Common myeloid progenitor, CD34-positive (primary cell): ENCODE measurements at regions of chr22 and their contacts with region 1.

Region 1: GRCh38 chr22:37295213-37295886 is 13.0 kb downstream of the CYTH4 start:
- DNase-seq: no peak
- H3K4me3 ChIP-seq: no peak overlapping the region
- H3K27ac ChIP-seq: no peak overlapping the region
- H3K4me1 ChIP-seq: peaks cover 17 to 62% (median 43%) of the 10 kb centered on the region in 4 experiments
- H3K27me3 ChIP-seq: no peaks in the 10 kb centered on the region

Region 2: DNA sequence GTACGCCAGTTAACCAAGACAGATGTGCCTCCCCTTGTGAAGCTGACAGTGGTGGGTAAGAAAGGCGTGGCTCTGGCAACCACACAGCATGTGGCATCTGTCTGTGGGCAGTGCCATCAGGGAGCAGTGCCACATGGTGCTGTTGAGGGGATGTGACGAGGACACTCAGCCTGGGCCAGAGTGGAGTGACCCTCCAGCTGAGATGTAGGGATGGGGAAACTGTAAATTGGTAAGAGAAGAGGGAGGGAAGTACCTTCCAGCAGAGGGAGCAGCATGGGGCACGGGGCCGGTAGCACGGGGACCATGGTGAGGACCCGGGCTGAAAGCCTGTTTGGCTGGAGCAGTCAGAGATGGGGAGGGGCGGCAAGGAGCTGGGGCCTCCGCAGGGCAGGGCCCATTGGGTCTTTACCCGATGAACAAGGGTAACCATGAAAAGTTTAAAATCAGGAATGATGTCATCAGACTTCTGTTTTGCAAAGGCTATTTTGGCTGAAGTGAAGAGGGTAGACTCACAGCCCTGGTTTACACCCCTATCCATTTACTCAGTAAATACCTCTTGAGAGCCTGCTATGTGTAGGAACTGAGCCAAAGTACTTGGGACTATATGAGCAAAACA is 196.3 kb before region 1 on chr22:
- CTCF ChIA-PET with region 1: no interaction called
- POLR2A ChIA-PET with region 1: no interaction called
- DNase-seq: peak; percentile 19 to 47 (median 32)
- H3K4me3 ChIP-seq: no peak overlapping the region
- H3K27ac ChIP-seq: no peak overlapping the region
- H3K4me1 ChIP-seq: no peaks in the 10 kb centered on the region
- H3K27me3 ChIP-seq: peaks cover 0 to 39% (median 7%) of the 10 kb centered on the region in 5 experiments

Region 3: DNA sequence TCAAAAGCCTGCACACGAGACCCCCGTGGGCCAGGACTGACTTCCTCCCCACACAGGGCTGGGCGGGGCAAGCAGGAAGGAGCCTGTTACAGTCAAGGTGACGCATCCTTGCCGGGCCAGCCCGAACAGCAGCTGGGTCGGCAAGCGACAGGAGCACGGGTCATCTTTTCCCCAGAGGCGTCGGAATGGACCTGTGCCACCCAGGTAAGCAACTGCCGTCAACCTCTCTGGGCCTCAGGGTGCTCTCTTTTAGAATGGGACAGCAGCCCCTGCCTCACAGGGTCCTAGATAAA is 13.0 kb before region 1 on chr22 and contains the start of gene CYTH4:
- CTCF ChIA-PET with region 1: interaction called, 15 read pairs
- POLR2A ChIA-PET with region 1: no interaction called
- DNase-seq: peak; percentile 79 to 91 (median 80)
- H3K4me3 ChIP-seq: peak within 1 kb of the TSS in 6 of 7 experiments; percentile 66 to 92 (median 76)
- H3K27ac ChIP-seq: peak within 1 kb of the TSS; percentile 33 to 62
- H3K4me1 ChIP-seq: peaks cover 32 to 92% (median 72%) of the 10 kb centered on the region in 4 experiments
- H3K27me3 ChIP-seq: no peaks in the 10 kb centered on the region